CD4-positive, alpha-beta T cell (primary cell): ENCODE measurements at regions of chr2 and their contacts with region 1.

Region 1: GRCh38 chr2:119759451-119760236 is at the start of gene PTPN4:
- DNase-seq: peak; percentile 91 to 99 (median 95)
- ATAC-seq: peak; percentile 88
- H3K4me3 ChIP-seq: peak within 1 kb of the TSS; percentile 92
- H3K4me3 Mint-ChIP-seq: peak within 1 kb of the TSS; percentile 97
- H3K27ac ChIP-seq: peak within 1 kb of the TSS; percentile 86 to 91
- H3K27ac Mint-ChIP-seq: peak within 1 kb of the TSS; percentile 94
- H3K4me1 ChIP-seq: peaks cover 9% of the 10 kb centered on the region
- H3K4me1 Mint-ChIP-seq: peaks cover 55% of the 10 kb centered on the region
- H3K27me3 ChIP-seq: no peaks in the 10 kb centered on the region
- H3K27me3 Mint-ChIP-seq: no peaks in the 10 kb centered on the region
- CTCF ChIP-seq: no peak
- total RNA-seq, gene PTPN4: 96.9 to 102 TPM

Region 2: GRCh38 chr2:119702918-119703401 is 56.7 kb before region 1 on chr2:
- CTCF ChIA-PET with region 1: no interaction called
- POLR2A ChIA-PET with region 1: no interaction called
- intact Hi-C with region 1: loop called in 1 of 2 experiments (anchors 5 kb)
- DNase-seq: peak; percentile 28 to 82 (median 54)
- ATAC-seq: peak; percentile 71
- H3K4me3 ChIP-seq: no peak overlapping the region
- H3K4me3 Mint-ChIP-seq: no peak overlapping the region
- H3K27ac ChIP-seq: no peak overlapping the region
- H3K27ac Mint-ChIP-seq: no peak overlapping the region
- H3K4me1 ChIP-seq: peaks cover 26% of the 10 kb centered on the region
- H3K4me1 Mint-ChIP-seq: peaks cover 6% of the 10 kb centered on the region
- H3K27me3 ChIP-seq: no peaks in the 10 kb centered on the region
- H3K27me3 Mint-ChIP-seq: no peaks in the 10 kb centered on the region
- CTCF ChIP-seq: peak; percentile 98

Region 3: GRCh38 chr2:119864318-119864717 is 104.7 kb after region 1 on chr2:
- CTCF ChIA-PET with region 1: no interaction called
- POLR2A ChIA-PET with region 1: no interaction called
- intact Hi-C with region 1: no loop called
- DNase-seq: peak in 3 of 14 experiments; percentile 24 to 37 (median 30)
- ATAC-seq: no peak
- H3K4me3 ChIP-seq: no peak overlapping the region
- H3K4me3 Mint-ChIP-seq: no peak overlapping the region
- H3K27ac ChIP-seq: no peak overlapping the region
- H3K27ac Mint-ChIP-seq: no peak overlapping the region
- H3K4me1 ChIP-seq: no peaks in the 10 kb centered on the region
- H3K4me1 Mint-ChIP-seq: peaks cover 87% of the 10 kb centered on the region
- H3K27me3 ChIP-seq: no peaks in the 10 kb centered on the region
- H3K27me3 Mint-ChIP-seq: no peaks in the 10 kb centered on the region
- CTCF ChIP-seq: no peak

Region 4: GRCh38 chr2:119929537-119929936 is 169.9 kb after region 1 on chr2:
- CTCF ChIA-PET with region 1: no interaction called
- POLR2A ChIA-PET with region 1: interaction called, 5 read pairs
- intact Hi-C with region 1: loop called in 1 of 2 experiments (anchors 5 kb)
- DNase-seq: peak in 6 of 14 experiments; percentile 4 to 90 (median 40)
- ATAC-seq: peak; percentile 90
- H3K4me3 ChIP-seq: peak overlapping the region; percentile 56
- H3K4me3 Mint-ChIP-seq: peak overlapping the region; percentile 78
- H3K27ac ChIP-seq: peak overlapping the region; percentile 50 to 61
- H3K27ac Mint-ChIP-seq: peak overlapping the region; percentile 94
- H3K4me1 ChIP-seq: peaks cover 24% of the 10 kb centered on the region
- H3K4me1 Mint-ChIP-seq: peaks cover 78% of the 10 kb centered on the region
- H3K27me3 ChIP-seq: no peaks in the 10 kb centered on the region
- H3K27me3 Mint-ChIP-seq: no peaks in the 10 kb centered on the region
- CTCF ChIP-seq: no peak

Region 5: DNA sequence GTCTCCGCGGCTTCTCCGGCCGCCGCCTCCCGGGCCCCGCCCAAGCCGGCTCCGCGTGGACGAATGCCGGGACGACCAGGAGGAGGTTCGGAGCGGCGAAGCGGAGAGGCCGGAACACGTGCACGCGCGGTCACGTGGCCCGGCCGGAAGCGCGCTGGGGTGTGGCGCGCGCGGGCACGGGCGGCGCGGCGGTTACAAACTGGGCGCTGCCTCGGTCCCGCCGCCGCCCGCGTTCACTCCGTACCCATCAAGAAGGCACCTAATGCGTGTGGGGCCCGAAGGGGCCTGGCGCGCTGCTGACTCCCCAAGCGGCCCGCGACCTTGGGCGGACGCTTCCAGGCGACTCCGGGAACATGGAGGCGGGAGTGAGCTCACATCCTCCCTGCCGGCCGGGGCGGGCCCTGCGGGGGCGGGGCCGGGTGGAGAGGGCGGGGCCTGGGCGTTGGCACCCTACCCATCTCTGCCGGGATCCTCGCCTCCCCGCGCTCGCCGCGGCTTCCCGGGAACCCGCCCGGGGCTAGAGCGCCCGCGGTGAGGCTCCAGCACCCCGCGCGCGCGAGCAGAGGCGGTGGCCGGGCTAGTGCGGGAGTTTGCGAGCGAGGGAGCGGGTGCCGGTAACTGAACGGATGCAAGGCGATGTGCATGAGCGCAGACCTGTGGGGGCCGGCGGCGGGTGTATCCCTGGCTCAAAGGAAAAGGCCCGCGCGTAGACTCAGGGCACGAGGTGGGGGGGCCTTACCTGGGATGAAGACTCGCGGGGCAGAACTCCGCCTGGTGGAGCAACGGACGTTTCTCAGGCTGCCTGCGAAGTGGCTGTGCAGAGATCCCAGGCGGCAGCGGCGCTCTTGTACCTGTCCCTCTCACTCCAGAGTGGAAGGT is 463.6 kb after region 1 on chr2 and contains the start of gene TMEM185B:
- CTCF ChIA-PET with region 1: no interaction called
- POLR2A ChIA-PET with region 1: interaction called, 6 read pairs
- intact Hi-C with region 1: loop called in 1 of 2 experiments (anchors 2 kb)
- DNase-seq: peak; percentile 80 to 95 (median 88)
- ATAC-seq: peak; percentile 95
- H3K4me3 ChIP-seq: peak within 1 kb of the TSS; percentile 72
- H3K4me3 Mint-ChIP-seq: peak within 1 kb of the TSS; percentile 87
- H3K27ac ChIP-seq: peak within 1 kb of the TSS; percentile 80 to 85
- H3K27ac Mint-ChIP-seq: peak within 1 kb of the TSS; percentile 87
- H3K4me1 ChIP-seq: peaks cover 37% of the 10 kb centered on the region
- H3K4me1 Mint-ChIP-seq: peaks cover 55% of the 10 kb centered on the region
- H3K27me3 ChIP-seq: no peaks in the 10 kb centered on the region
- H3K27me3 Mint-ChIP-seq: no peaks in the 10 kb centered on the region
- CTCF ChIP-seq: no peak
- total RNA-seq, gene TMEM185B: 17.7 to 19.0 TPM

Region 6: GRCh38 chr2:120312861-120313694 is 553.4 kb after region 1 on chr2:
- CTCF ChIA-PET with region 1: no interaction called
- POLR2A ChIA-PET with region 1: interaction called, 3 read pairs
- intact Hi-C with region 1: loop called (anchors 10 kb)
- DNase-seq: peak; percentile 60 to 84 (median 68)
- ATAC-seq: peak; percentile 78
- H3K4me3 ChIP-seq: peak overlapping the region; percentile 52
- H3K4me3 Mint-ChIP-seq: peak overlapping the region; percentile 74
- H3K27ac ChIP-seq: no peak overlapping the region
- H3K27ac Mint-ChIP-seq: peak overlapping the region; percentile 66
- H3K4me1 ChIP-seq: peaks cover 26% of the 10 kb centered on the region
- H3K4me1 Mint-ChIP-seq: peaks cover 29% of the 10 kb centered on the region
- H3K27me3 ChIP-seq: no peaks in the 10 kb centered on the region
- H3K27me3 Mint-ChIP-seq: no peaks in the 10 kb centered on the region
- CTCF ChIP-seq: peak; percentile 90